Right ventricle myocardium inferior (tissue), 1 donor: ENCODE measurements at regions of chr13 and their contacts with region 1.

Region 1: GRCh38 chr13:80342471-80343380 is 1.8 kb upstream of the SPRY2 start:
- DNase-seq: peak; percentile 95
- ATAC-seq: peak; percentile 44

Region 2: DNA sequence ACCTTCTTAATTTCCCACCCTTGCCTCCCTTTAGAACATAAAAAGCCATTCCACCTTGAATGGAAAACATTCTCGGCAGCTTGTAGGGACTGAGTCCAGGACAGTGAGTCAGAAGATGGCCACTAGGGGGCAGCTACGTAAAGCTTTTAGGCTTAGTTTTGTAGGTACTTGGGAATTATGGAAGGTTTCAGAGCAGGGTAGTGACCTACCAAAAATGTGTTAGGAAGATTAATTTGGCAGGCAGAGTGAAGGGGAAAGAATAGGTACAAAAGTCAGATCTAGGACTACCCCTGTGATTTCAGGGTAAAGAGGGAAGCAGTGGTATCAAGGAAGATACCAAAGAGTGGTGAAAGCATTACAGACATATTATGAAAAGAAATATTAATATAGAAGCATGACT is 663.4 kb before region 1 on chr13:
- intact Hi-C with region 1: loop called (anchors 5 kb)
- DNase-seq: peak; percentile 48
- ATAC-seq: peak; percentile 71

Region 3: DNA sequence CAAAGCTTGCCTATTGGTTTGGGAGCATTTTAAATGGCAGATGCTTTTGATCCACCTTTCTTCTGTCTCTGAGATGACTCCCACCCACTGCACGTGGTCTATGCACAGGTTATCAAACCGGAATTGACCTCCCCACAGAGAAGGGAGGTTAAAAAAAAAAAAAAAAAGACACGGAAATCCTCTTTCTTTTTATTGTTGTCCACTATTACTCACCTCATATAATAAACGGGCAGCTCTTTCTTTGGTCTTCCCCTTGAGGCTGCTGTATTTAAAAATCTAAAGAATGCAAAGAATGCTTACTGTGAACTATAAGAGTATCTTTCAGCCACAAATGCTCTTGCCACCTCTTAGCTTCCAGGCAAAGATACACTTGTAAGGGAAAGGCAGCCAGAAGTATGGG is 532.1 kb before region 1 on chr13:
- intact Hi-C with region 1: no loop called
- DNase-seq: no peak
- ATAC-seq: no peak

Region 4: GRCh38 chr13:80029170-80029569 is 313.6 kb before region 1 on chr13:
- intact Hi-C with region 1: loop called (anchors 5 kb)
- DNase-seq: peak; percentile 58
- ATAC-seq: no peak

Region 5: DNA sequence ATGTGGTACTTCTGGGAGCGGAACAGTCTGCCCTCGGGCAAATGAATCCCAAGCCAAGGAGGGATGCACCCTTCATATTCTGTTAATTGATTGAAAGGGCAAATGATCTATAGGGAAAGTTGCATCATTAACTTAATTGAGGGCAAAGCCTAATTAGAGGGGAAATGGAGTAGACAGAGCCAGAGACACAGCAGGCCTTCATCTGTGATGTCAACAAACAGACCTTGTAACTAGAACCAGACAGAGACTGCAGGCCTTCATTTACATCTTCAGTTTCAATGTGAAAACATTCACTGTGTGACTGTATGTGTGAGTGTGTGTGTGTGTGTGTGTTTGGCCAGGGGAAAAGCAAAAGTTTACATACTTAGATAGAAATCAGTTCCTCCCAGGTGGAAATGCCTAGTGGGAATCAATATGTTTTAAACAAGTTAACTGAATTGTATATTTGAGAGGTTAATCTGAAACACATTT is 128.2 kb before region 1 on chr13:
- intact Hi-C with region 1: no loop called
- DNase-seq: no peak
- ATAC-seq: no peak

Region 6: GRCh38 chr13:80235166-80235966 is 107.4 kb before region 1 on chr13:
- intact Hi-C with region 1: loop called (anchors 5 kb)
- DNase-seq: no peak
- ATAC-seq: no peak

Region 7: GRCh38 chr13:80923907-80924306 is 581.2 kb after region 1 on chr13:
- intact Hi-C with region 1: loop called (anchors 2 kb)
- DNase-seq: no peak
- ATAC-seq: peak; percentile 76